IMR-90 (cell line): ENCODE measurements at regions of chr3 and their contacts with region 1.

Region 1: DNA sequence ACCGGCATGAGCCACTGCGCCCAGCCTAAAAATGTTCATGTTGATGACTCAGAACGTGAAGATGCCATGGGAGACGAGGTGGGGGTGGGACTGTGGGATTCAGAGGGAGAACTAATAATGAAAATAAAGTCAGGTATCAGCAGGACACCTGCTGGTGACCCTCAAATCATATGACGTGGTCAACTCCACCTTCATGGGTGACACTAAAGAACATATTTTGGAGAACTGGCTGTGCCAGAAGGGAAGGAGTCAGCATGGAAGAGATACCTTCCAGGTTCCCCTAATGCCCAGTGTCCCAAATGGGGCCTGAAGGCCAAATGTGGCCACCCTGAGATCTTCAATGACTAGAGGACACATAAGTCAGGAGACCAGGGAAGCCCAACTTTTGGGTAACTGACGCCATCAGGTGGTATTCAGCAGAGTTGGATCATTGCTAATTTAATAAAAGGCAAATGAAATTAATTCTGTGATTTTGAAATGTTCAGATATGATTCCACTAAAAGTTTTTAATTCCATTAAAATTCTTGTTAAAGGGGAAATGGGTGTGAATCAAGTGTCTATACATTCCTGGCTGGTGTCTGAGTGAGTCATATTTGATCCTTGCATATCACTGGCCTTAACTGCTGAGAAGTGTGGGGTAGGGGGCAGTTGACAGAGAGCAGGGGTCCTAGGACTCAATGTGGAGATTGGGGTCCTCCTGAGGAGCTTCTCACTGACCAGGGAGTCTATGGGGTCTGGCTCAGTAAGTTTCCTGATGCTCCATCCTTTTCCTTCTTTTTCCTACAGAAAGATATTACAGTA is 88.7 kb upstream of the GSK3B start:
- DNase-seq: peak; percentile 62
- ATAC-seq: peak; percentile 80
- H3K4me3 ChIP-seq: no peak overlapping the region
- H3K27ac ChIP-seq: no peak overlapping the region
- H3K4me1 ChIP-seq: peaks cover 3% of the 10 kb centered on the region
- H3K27me3 ChIP-seq: no peaks in the 10 kb centered on the region
- CTCF ChIP-seq: peak; percentile 77
- POLR2A ChIP-seq: no peak
- RAD21 ChIP-seq: peak; percentile 86

Region 2: GRCh38 chr3:119810018-119810435 is 372.9 kb before region 1 on chr3:
- CTCF ChIA-PET with region 1: no interaction called
- POLR2A ChIA-PET with region 1: no interaction called
- dilution Hi-C with region 1: no loop called
- in situ Hi-C with region 1: loop called (anchors 10 kb)
- intact Hi-C with region 1: no loop called
- DNase-seq: peak; percentile 18
- ATAC-seq: peak; percentile 77
- H3K4me3 ChIP-seq: peak overlapping the region; percentile 12
- H3K27ac ChIP-seq: no peak overlapping the region
- H3K4me1 ChIP-seq: no peaks in the 10 kb centered on the region
- H3K27me3 ChIP-seq: peaks cover 45% of the 10 kb centered on the region
- CTCF ChIP-seq: no peak
- POLR2A ChIP-seq: no peak
- RAD21 ChIP-seq: no peak

Region 3: GRCh38 chr3:119819806-119820205 is 363.1 kb before region 1 on chr3:
- CTCF ChIA-PET with region 1: interaction called, 7 read pairs
- POLR2A ChIA-PET with region 1: no interaction called
- dilution Hi-C with region 1: no loop called
- in situ Hi-C with region 1: loop called (anchors 10 kb)
- intact Hi-C with region 1: loop called (anchors 5 kb)
- DNase-seq: peak; percentile 6
- ATAC-seq: no peak
- H3K4me3 ChIP-seq: no peak overlapping the region
- H3K27ac ChIP-seq: no peak overlapping the region
- H3K4me1 ChIP-seq: no peaks in the 10 kb centered on the region
- H3K27me3 ChIP-seq: peaks cover 18% of the 10 kb centered on the region; the same call in 1 of the 2 replicates
- CTCF ChIP-seq: no peak
- POLR2A ChIP-seq: no peak
- RAD21 ChIP-seq: no peak

Region 4: DNA sequence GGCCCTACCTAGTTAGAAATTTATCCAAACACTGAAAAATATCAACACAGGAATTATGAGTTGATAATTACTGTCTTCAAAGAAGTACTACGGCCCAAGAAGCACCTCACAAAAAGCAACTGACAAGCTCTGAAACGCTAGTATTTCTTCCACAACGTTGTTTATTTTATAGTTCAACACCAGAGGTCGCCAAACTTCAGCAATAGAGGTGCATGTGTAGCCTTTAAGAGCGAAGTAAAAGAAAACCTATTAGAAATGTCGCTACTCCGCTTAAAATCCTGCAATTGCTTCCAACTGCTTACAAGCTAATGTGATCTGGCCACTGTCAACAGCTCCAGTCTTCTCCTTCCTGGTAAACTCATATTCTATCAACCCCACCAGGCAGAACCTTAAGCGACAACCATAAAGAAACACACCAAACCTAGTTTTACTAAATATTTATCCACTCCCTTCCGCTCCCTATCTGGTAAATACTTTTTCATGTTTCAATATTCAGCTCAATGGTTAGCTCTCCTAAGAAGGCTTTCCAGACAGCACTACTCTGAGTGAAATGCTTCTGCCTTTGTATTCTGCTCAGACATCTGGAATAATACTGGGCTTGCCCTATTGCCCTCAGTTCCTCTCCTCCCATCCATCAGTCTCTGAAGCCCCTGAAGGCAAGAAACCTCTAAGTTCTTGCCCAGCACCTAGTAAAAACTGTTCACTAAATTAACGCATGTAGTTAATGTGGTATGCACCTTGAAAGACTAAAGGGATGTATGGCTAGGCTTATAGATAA is 290.8 kb before region 1 on chr3:
- CTCF ChIA-PET with region 1: interaction called, 3 read pairs
- POLR2A ChIA-PET with region 1: no interaction called
- dilution Hi-C with region 1: no loop called
- in situ Hi-C with region 1: loop called (anchors 5 kb)
- intact Hi-C with region 1: loop called (anchors 1 kb)
- DNase-seq: peak; percentile 71
- ATAC-seq: peak; percentile 70; the same call in 1 of the 2 replicates
- H3K4me3 ChIP-seq: no peak overlapping the region
- H3K27ac ChIP-seq: no peak overlapping the region
- H3K4me1 ChIP-seq: no peaks in the 10 kb centered on the region
- H3K27me3 ChIP-seq: no peaks in the 10 kb centered on the region
- CTCF ChIP-seq: peak; percentile 77
- POLR2A ChIP-seq: no peak
- RAD21 ChIP-seq: peak; percentile 89

Region 5: DNA sequence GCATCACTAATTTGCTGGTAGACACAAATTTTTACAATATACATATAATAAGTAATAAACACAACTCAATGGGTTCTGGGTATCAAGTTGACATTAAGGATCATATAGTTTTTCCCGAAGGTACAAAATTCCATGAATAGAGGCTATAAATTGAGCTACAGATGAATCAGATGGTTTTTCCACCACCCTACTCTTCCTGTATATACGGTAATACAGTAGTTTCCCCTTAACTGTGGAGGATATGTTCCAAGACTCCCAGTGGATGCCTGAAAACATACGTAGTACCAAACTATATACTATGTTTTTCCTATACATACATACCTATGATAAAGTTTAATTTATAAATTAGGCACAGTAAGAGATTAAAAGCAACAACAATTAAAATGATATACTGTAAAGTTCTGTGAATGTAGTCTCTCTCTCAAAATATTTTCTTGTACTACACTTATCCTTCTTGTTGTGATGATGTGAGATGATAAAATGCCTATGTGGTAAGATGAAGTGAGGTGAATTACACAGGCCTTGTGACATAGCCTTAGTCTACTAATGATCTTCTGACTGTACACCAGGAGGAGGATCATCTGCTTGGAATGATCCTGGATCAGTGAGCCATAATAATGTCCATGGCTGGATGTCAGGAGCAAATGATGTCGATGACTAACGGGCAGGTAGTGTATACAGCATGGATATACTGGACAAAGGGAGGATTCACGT is 284.3 kb before region 1 on chr3:
- CTCF ChIA-PET with region 1: no interaction called
- POLR2A ChIA-PET with region 1: no interaction called
- dilution Hi-C with region 1: no loop called
- in situ Hi-C with region 1: loop called (anchors 5 kb)
- intact Hi-C with region 1: no loop called
- DNase-seq: peak; percentile 75
- ATAC-seq: peak; percentile 57
- H3K4me3 ChIP-seq: no peak overlapping the region
- H3K27ac ChIP-seq: no peak overlapping the region
- H3K4me1 ChIP-seq: no peaks in the 10 kb centered on the region
- H3K27me3 ChIP-seq: no peaks in the 10 kb centered on the region
- CTCF ChIP-seq: no peak
- POLR2A ChIP-seq: no peak
- RAD21 ChIP-seq: no peak

Region 6: GRCh38 chr3:120239644-120240043 is 56.7 kb after region 1 on chr3:
- CTCF ChIA-PET with region 1: no interaction called
- POLR2A ChIA-PET with region 1: no interaction called
- dilution Hi-C with region 1: no loop called
- in situ Hi-C with region 1: no loop called
- intact Hi-C with region 1: no loop called
- DNase-seq: no peak
- ATAC-seq: no peak
- H3K4me3 ChIP-seq: no peak overlapping the region
- H3K27ac ChIP-seq: no peak overlapping the region
- H3K4me1 ChIP-seq: no peaks in the 10 kb centered on the region; the same call in 1 of the 2 replicates
- H3K27me3 ChIP-seq: peaks cover 14% of the 10 kb centered on the region
- CTCF ChIP-seq: no peak
- POLR2A ChIP-seq: no peak
- RAD21 ChIP-seq: no peak